Activated CD8-positive, alpha-beta T cell treated with anti-CD3 and anti-CD28 coated beads for 36 hours (primary cell): ENCODE measurements at regions of chr1 and their contacts with region 1.

Region 1: DNA sequence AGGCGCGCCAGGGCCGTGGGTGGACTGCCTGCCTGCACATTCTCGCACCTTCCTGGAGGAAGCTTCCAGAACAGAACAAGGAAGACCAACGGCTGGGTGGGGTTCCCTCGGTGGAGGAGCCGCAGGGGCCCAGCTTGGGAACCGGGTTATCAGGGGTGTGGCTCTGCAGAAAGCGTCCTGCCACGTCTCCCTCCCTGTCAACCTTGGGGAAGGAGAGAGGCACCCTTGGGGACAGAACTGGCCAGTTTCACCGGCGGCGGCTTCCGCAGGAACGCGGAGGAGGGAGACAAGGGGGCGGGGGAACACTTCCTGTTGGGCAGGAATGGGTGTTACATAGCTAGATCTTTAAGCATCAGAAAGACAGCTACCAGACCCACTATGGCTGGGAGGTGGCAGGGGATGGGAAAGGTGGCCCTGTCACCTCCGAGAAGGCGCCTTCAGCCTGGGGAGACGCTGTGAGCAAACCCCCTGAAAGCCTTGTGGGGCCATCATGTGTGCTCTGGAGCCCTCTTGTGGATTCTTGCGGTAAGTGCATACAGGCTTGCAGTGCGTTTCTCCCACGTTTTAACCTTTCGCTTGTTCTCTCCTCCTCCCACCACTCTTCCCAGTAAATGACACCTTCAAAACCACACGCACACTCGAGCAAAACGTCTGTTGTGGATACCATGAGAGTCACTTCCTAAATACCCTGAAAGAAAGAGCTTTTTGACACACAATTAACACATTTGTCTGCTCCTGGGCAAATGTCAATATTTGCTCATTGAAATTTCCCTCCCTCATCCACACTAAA is 3.8 kb upstream of the PLEKHA6 start:
- DNase-seq: peak; percentile 89
- ATAC-seq: peak; percentile 87
- H3K4me3 Mint-ChIP-seq: peak overlapping the region; percentile 51
- H3K27ac Mint-ChIP-seq: peak overlapping the region; percentile 80
- H3K4me1 Mint-ChIP-seq: peaks cover 46% of the 10 kb centered on the region
- H3K27me3 Mint-ChIP-seq: peaks cover 4% of the 10 kb centered on the region
- CTCF ChIP-seq: peak; percentile 95

Region 2: DNA sequence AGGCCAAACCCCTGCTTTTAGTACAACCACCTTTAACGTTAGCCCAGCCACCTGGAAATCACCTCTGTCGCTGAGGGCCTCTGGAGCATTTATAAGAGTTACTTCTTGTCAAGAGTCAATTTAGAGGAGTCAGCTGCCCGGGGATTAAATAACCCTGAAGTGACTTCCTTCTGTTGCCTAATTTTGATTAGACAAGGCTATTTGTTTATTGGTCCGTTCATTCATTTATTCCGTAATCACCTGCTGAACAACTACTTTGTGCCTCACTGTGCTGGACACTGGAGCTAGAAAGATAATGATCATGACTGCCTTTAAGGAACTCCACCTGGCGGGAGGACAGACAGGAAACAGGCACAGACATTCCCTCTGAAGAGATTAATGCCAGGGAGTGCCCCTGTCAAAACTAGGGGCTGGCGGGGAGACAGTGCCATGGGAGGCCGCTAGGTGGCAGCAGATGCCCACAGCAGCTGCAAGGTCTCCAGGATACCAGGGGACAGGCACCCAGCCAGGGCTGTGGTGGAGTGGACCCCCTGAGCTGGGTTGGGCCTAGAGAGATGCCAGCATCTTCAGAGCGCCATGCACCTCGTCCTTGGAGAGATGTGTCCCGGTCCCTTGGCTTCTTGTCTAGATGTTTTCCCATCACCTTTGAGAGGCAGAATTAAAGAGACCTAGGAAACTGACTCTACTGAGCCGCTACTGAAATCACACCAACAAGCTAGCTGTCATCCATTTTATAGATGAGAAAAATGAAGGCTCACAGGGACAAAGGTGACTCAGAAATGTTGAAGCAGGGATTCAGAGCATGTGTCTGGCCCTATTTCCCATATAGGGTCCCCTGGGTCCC is 201.1 kb before region 1 on chr1:
- CTCF ChIA-PET with region 1: interaction called, 92 read pairs
- POLR2A ChIA-PET with region 1: no interaction called
- intact Hi-C with region 1: loop called (anchors 1 kb)
- DNase-seq: peak; percentile 86
- ATAC-seq: peak; percentile 98
- H3K4me3 Mint-ChIP-seq: no peak overlapping the region
- H3K27ac Mint-ChIP-seq: no peak overlapping the region
- H3K4me1 Mint-ChIP-seq: peaks cover 2% of the 10 kb centered on the region
- H3K27me3 Mint-ChIP-seq: peaks cover 7% of the 10 kb centered on the region
- CTCF ChIP-seq: peak; percentile 96

Region 3: GRCh38 chr1:204257954-204258752 is 105.4 kb before region 1 on chr1:
- CTCF ChIA-PET with region 1: interaction called, 142 read pairs
- POLR2A ChIA-PET with region 1: no interaction called
- intact Hi-C with region 1: loop called (anchors 5 kb)
- DNase-seq: peak; percentile 63
- ATAC-seq: peak; percentile 47
- H3K4me3 Mint-ChIP-seq: no peak overlapping the region
- H3K27ac Mint-ChIP-seq: no peak overlapping the region
- H3K4me1 Mint-ChIP-seq: no peaks in the 10 kb centered on the region
- H3K27me3 Mint-ChIP-seq: no peaks in the 10 kb centered on the region
- CTCF ChIP-seq: peak; percentile 75

Region 4: DNA sequence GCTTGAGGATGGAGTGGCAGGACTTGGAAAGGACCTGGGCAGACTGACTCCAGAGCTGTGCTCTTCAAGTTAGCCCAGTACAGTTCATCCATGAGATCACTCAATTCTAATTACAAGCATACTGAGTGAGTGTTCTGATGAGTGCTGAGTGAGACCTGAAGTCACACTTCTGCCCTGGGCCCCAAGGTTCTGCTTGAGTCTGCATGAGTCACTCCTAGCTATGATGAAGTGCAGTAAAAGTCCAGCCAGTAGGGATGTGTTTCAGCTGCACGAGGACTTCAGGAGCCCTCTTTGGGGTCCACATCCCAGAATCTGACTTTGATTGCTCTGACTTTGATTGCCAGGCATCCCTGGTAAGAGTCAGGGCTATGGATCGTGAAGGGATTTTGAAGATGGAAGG is 39.6 kb before region 1 on chr1:
- CTCF ChIA-PET with region 1: interaction called, 57 read pairs
- POLR2A ChIA-PET with region 1: interaction called, 8 read pairs
- intact Hi-C with region 1: no loop called
- DNase-seq: peak; percentile 86
- ATAC-seq: peak; percentile 99
- H3K4me3 Mint-ChIP-seq: no peak overlapping the region
- H3K27ac Mint-ChIP-seq: peak overlapping the region; percentile 70
- H3K4me1 Mint-ChIP-seq: peaks cover 24% of the 10 kb centered on the region
- H3K27me3 Mint-ChIP-seq: peaks cover 2% of the 10 kb centered on the region
- CTCF ChIP-seq: no peak

Region 5: GRCh38 chr1:204377795-204378608 is 14.5 kb after region 1 on chr1:
- CTCF ChIA-PET with region 1: interaction called, 66 read pairs
- POLR2A ChIA-PET with region 1: interaction called, 5 read pairs
- intact Hi-C with region 1: no loop called
- DNase-seq: peak; percentile 67
- ATAC-seq: peak; percentile 73
- H3K4me3 Mint-ChIP-seq: peak overlapping the region; percentile 82
- H3K27ac Mint-ChIP-seq: peak overlapping the region; percentile 67
- H3K4me1 Mint-ChIP-seq: peaks cover 14% of the 10 kb centered on the region
- H3K27me3 Mint-ChIP-seq: peaks cover 14% of the 10 kb centered on the region
- CTCF ChIP-seq: no peak

Region 6: GRCh38 chr1:204411451-204412204 is 48.1 kb after region 1 on chr1 and contains the start of gene PPP1R15B:
- CTCF ChIA-PET with region 1: interaction called, 12 read pairs
- POLR2A ChIA-PET with region 1: interaction called, 3 read pairs
- intact Hi-C with region 1: no loop called
- DNase-seq: peak; percentile 97
- ATAC-seq: peak; percentile 92
- H3K4me3 Mint-ChIP-seq: peak within 1 kb of the TSS; percentile 99
- H3K27ac Mint-ChIP-seq: peak within 1 kb of the TSS; percentile 100
- H3K4me1 Mint-ChIP-seq: peaks cover 19% of the 10 kb centered on the region
- H3K27me3 Mint-ChIP-seq: no peaks in the 10 kb centered on the region
- CTCF ChIP-seq: no peak
- total RNA-seq, gene PPP1R15B: 63.8 to 64.6 TPM

Region 7: DNA sequence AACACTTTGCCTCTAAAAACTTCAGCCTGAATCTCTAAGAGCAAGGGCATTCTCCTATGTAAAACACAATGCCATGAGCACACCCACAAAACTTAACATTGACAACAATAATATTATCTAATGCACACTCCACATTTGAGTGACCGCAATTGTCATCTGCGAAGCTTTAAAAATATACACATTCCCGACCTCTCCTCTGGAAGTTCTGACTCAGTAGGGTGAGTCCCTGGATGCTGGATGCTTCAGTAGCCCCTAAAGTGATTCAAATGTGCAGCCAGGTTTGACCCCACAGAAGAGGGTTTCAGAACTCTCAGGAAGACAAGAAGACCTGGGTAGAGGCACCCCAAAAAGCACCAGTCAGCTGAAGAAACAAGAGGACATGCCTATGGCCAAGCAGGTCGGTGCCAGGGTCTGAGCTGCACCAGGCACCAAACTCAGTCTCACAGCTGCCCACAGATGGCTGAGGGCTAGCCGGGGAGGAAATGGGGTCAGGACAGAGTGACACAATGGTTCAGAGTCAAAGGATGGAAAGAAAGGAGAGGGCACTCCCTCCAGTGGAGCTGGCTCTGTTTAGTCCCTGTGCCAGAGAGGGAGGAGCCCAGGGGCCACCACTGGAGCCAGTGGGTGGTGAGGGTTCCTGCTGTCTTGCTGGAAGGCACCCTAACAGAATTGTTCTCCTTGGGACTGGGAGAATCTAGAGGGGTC is 113.7 kb after region 1 on chr1:
- CTCF ChIA-PET with region 1: no interaction called
- POLR2A ChIA-PET with region 1: no interaction called
- intact Hi-C with region 1: no loop called
- DNase-seq: no peak
- ATAC-seq: no peak
- H3K4me3 Mint-ChIP-seq: no peak overlapping the region
- H3K27ac Mint-ChIP-seq: no peak overlapping the region
- H3K4me1 Mint-ChIP-seq: peaks cover 47% of the 10 kb centered on the region
- H3K27me3 Mint-ChIP-seq: no peaks in the 10 kb centered on the region
- CTCF ChIP-seq: no peak